Activated naive CD8-positive, alpha-beta T cell treated with anti-CD3 and anti-CD28 coated beads, Interleukin-2, amount 10 ng/mL, durations not matched to agents 7 days and 5 days (primary cell): ENCODE measurements at regions of chr11 and their contacts with region 1.

Region 1: DNA sequence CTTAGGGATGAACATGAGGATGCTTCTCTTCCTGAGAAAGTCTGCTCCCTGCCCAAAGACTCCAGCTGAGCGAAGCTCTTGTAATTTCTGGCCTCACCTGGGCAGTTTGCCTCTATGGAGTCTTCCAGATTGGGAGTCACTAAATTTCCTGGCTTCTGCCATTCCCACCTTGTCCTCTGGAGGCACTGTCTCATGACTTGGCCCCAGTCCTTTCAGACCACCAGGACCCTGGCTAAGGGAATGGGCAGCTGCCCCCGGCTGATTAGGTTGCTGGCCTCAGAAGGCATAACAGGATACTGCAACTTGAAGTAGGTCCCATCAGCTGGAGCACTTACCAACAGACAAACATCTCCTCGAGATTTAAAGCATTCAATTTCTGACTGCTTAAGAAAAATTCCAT is 128.1 kb upstream of the SPON1 start:
- DNase-seq: no peak
- ATAC-seq: no peak
- H3K4me3 Mint-ChIP-seq: no peak overlapping the region
- H3K27ac Mint-ChIP-seq: no peak overlapping the region
- H3K4me1 Mint-ChIP-seq: peaks cover 7% of the 10 kb centered on the region
- H3K27me3 Mint-ChIP-seq: peaks cover 2% of the 10 kb centered on the region

Region 2: DNA sequence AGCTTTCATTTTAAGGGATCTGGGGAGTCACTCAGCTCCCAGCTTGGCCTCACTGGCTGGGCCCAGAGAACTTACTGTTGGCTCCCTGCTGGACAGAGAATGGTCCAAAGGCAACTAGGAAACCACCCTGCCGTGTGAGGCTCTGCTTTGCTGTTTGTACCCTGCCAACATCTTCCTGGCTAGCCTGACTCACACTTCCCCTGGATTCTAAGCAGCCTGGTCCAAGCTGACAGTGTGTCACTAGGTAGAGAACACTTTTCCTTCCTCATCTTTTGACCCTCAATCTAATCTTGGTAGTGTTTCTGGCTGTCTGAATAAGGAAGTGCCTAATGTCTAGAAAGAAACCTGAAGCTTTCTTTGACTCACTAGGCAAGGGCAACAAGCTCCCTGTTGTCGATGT is 89.3 kb before region 1 on chr11:
- POLR2A ChIA-PET with region 1: no interaction called
- DNase-seq: no peak
- ATAC-seq: no peak
- H3K4me3 Mint-ChIP-seq: no peak overlapping the region
- H3K27ac Mint-ChIP-seq: no peak overlapping the region
- H3K4me1 Mint-ChIP-seq: no peaks in the 10 kb centered on the region
- H3K27me3 Mint-ChIP-seq: peaks cover 20% of the 10 kb centered on the region

Region 3: DNA sequence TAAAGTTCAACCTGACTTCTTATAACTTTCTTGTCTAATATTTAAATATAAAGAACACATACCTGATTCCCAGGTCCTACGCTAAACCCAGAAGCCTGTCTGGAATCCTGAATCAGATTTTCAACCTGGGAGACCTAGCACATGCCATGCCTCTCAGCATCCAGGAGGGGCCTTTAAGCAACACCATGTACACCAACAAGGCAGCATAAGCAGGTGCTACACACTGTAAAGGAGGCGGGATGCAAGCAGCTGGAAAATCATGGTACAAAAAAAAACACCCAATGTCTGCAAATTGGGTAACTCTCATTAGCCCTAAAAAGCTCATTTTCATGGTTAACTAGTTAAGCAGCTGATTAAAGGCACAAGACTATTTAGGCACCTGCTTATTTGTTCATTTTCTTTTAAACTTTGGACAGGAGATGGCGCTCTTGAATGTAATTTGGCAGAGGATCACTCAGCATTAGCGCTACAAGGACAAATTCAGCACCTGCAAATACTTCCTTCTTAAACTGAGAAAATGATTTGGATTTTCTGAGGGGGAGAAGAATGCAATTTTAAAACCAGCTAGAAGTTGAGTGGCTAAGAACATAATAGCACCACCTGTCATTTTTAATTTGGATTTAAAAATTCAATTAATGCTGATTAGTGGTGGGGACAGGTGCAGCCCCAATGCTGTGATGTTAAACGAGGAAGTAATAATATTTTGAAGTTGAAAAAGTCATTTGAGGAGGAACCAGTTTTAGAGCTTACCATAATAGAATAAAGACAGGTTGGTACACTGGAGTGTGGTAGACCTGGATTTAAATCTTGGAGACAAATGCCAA is 62.0 kb before region 1 on chr11:
- POLR2A ChIA-PET with region 1: no interaction called
- DNase-seq: no peak
- ATAC-seq: peak; percentile 79
- H3K4me3 Mint-ChIP-seq: no peak overlapping the region
- H3K27ac Mint-ChIP-seq: no peak overlapping the region
- H3K4me1 Mint-ChIP-seq: no peaks in the 10 kb centered on the region
- H3K27me3 Mint-ChIP-seq: peaks cover 21% of the 10 kb centered on the region

Region 4: DNA sequence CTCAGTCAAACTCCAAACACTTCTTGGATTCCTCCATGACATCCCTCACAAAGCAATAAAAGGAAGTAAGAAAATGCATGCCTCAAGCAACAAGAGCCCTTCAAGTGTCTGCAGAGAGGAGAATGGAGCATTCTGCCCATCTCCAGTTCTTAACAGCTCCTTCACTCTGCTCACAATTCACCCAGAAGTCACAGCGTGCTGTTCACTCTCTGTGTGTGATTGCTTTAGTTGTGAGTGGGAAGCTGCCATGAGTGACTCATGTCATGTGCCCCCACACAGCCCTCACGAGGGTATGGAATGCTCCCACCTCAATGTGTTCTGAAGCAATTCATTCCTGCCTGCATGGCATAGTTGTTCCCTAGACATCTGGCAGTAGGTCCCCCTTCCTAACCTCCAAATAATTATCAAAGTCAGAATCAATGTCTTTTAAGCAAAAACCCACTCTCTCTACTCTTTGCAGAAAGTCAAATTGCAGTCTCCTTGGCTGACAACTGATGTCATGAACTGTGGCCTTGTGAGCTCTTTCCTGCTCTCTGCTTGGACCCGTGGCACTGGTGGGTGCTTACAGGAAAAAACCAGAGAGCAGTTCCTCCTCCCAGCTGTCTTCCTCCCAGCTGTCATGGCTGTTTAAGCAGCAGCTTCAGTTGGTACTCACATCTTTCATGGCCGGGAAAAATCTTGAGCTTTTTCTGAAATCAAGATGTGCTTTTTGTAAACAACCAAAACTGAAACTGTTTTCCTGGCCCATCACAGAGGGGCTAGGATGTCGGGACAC is 16.0 kb after region 1 on chr11:
- POLR2A ChIA-PET with region 1: no interaction called
- DNase-seq: no peak
- ATAC-seq: peak; percentile 42
- H3K4me3 Mint-ChIP-seq: no peak overlapping the region
- H3K27ac Mint-ChIP-seq: no peak overlapping the region
- H3K4me1 Mint-ChIP-seq: peaks cover 4% of the 10 kb centered on the region
- H3K27me3 Mint-ChIP-seq: peaks cover 10% of the 10 kb centered on the region

Region 5: DNA sequence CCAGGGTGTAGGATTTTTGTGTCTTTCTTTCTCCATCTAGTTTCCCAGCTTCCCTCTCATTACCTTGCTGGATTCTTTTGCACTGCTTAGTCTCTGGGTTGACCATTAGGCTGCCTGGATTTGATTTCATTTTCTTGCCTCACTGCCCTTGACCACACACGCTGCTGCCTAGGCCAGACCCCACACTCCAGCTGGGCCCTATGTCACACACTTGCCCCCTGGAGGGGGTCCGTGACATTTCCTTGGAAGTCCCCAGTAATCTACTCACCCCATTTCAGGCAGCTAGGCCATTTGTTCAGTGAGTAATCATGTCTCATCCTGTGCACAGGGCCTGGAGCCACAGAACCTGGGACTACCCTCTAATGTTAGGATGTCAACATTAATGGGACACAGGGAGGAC is 46.2 kb after region 1 on chr11:
- POLR2A ChIA-PET with region 1: no interaction called
- DNase-seq: no peak
- ATAC-seq: no peak
- H3K4me3 Mint-ChIP-seq: no peak overlapping the region
- H3K27ac Mint-ChIP-seq: no peak overlapping the region
- H3K4me1 Mint-ChIP-seq: peaks cover 6% of the 10 kb centered on the region
- H3K27me3 Mint-ChIP-seq: no peaks in the 10 kb centered on the region

Region 6: GRCh38 chr11:14443638-14444037 is 609.2 kb after region 1 on chr11:
- POLR2A ChIA-PET with region 1: interaction called, 10 read pairs
- DNase-seq: no peak
- ATAC-seq: no peak
- H3K4me3 Mint-ChIP-seq: no peak overlapping the region
- H3K27ac Mint-ChIP-seq: no peak overlapping the region
- H3K4me1 Mint-ChIP-seq: peaks cover 28% of the 10 kb centered on the region
- H3K27me3 Mint-ChIP-seq: no peaks in the 10 kb centered on the region